ENCODE measurements at regions of chr9 and their contacts with region 1.

Region 1: DNA sequence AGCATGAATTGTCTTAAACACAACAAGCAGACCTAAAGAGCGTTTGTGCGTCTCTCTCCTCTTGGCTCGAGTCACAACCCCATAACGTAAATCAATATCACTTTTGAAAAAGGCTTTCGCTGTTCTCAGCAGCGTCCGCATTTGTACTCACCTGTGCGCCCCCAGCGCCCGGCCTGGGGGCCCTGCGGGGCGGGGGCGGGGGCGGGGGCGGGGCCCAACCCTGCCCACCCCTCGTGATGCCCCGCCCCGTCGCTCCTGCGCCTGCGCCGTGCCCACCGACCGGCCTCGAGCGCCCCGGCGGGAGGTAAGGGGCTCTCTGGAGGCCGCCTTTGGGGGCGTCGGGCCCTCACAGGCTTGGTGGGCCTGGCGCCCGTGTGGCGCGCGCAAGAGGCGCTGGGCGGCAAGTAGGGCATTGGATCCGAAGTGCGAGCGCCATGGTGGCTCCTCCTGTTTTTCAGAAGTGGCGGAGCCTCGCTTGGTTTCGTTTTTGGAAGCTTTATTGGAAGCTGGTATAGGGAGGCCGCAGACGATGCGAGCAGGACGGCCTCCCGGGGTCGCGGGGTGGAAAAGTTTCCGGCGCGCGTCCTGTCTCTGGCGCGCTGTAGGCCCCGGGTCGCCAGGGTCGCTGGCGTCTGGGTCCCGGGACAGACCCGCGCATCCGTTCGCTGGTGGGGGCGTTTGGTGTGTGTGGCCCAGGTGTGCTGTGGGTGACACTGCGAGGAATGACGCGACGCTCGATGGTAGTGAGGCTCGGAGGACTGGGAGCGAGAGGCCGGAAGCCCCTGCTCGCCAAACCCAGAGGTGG is at the start of gene STX17:
- DNase-seq: peak; percentile 81 to 90
- ATAC-seq: peak; percentile 81 to 93 (median 87)
- H3K4me3 ChIP-seq: peak within 1 kb of the TSS; percentile 85
- H3K4me3 Mint-ChIP-seq: peak within 1 kb of the TSS; percentile 97
- H3K27ac ChIP-seq: peak within 1 kb of the TSS; percentile 95
- H3K27ac Mint-ChIP-seq: peak within 1 kb of the TSS; percentile 95 to 96
- H3K4me1 ChIP-seq: peaks cover 11% of the 10 kb centered on the region
- H3K4me1 Mint-ChIP-seq: peaks cover 25 to 28% of the 10 kb centered on the region in 2 donors
- H3K27me3 ChIP-seq: no peaks in the 10 kb centered on the region
- H3K27me3 Mint-ChIP-seq: peaks cover 7 to 9% of the 10 kb centered on the region in 2 donors
- CTCF ChIP-seq: no peak
- total RNA-seq, gene STX17: 28.4 to 41.5 (median 33.8) TPM

Region 2: DNA sequence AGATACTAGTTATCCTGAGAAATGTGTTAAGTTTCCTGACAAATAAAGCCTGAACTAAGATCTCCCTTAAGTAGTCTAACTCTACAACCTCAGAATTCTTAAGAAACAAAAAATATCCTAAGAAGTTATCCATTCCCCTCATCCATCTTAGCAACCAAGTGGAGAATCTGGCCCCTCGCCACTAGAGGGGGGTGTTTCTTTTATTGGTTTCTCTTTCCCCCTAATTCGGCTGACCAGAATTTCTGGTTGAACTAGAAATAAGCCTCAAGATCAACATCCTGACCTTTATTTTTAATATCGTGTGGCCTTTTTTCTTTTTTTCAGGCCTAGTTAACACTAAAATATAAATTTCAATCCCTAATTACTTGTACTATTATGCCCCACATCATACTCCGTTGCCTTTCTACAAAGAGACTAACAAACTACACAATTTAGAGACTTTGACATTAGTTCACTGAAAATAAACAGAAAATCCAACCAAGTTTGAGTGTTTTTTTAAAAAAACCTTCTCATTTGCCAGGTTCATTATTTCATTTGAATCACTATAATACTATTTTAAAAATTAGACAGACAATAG is 99.2 kb before region 1 on chr9:
- intact Hi-C with region 1: loop called (anchors 1 kb)
- DNase-seq: peak; percentile 49 to 87
- ATAC-seq: peak; percentile 85 to 93 (median 91)
- H3K4me3 ChIP-seq: no peak overlapping the region
- H3K4me3 Mint-ChIP-seq: no peak overlapping the region
- H3K27ac ChIP-seq: no peak overlapping the region
- H3K27ac Mint-ChIP-seq: peak overlapping the region; percentile 2 to 13
- H3K4me1 ChIP-seq: no peaks in the 10 kb centered on the region
- H3K4me1 Mint-ChIP-seq: peaks cover 10% of the 10 kb centered on the region in 2 donors
- H3K27me3 ChIP-seq: no peaks in the 10 kb centered on the region
- H3K27me3 Mint-ChIP-seq: no peaks in the 10 kb centered on the region
- CTCF ChIP-seq: peak; percentile 88

Region 3: DNA sequence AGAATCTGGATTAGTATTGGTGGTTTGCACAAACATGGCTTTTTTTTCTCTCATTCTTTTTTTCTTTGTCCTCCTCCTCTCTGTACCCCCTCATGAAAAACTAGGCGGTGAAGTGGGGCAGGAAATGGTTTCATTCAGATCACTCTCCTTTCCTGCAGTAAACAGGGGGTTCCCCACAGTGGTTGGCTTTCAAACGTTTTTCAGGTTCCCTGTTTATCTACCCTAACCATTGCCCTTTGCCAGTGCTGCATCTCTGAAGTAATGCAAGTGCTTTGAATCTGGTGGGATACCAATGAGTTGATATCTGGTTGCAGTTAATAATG is 55.1 kb before region 1 on chr9:
- intact Hi-C with region 1: loop called (anchors 2 kb)
- DNase-seq: peak in 1 of 2 donors; percentile 80
- ATAC-seq: peak; percentile 85 to 92 (median 87)
- H3K4me3 ChIP-seq: no peak overlapping the region
- H3K4me3 Mint-ChIP-seq: peak overlapping the region; percentile 84
- H3K27ac ChIP-seq: peak overlapping the region; percentile 66
- H3K27ac Mint-ChIP-seq: peak overlapping the region; percentile 88 to 92
- H3K4me1 ChIP-seq: peaks cover 32% of the 10 kb centered on the region
- H3K4me1 Mint-ChIP-seq: peaks cover 36% of the 10 kb centered on the region in 2 donors
- H3K27me3 ChIP-seq: no peaks in the 10 kb centered on the region
- H3K27me3 Mint-ChIP-seq: no peaks in the 10 kb centered on the region
- CTCF ChIP-seq: no peak

Region 4: DNA sequence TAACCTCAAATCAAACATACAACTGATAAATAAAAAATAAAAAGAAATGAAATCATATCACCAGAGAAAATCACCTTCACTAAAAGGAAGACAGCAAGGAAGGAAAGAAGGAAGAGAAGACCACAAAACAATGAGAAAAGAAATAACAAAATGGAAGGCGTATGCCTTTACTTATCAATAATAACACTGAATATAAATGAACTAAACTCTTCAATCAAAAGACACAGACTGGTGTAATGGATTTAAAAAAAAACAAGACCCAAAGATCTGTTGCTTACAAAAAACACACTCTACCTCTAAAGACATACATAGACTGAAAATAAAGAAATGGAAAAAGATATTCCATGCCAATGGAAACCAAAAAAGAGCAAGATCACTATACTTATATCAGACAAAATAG is 131.9 kb after region 1 on chr9:
- intact Hi-C with region 1: no loop called
- DNase-seq: no peak
- ATAC-seq: no peak
- H3K4me3 ChIP-seq: no peak overlapping the region
- H3K4me3 Mint-ChIP-seq: no peak overlapping the region
- H3K27ac ChIP-seq: no peak overlapping the region
- H3K27ac Mint-ChIP-seq: no peak overlapping the region
- H3K4me1 ChIP-seq: no peaks in the 10 kb centered on the region
- H3K4me1 Mint-ChIP-seq: peaks cover 71 to 76% of the 10 kb centered on the region in 2 donors
- H3K27me3 ChIP-seq: no peaks in the 10 kb centered on the region
- H3K27me3 Mint-ChIP-seq: no peaks in the 10 kb centered on the region
- CTCF ChIP-seq: no peak